Activated CD4-positive, alpha-beta memory T cell treated with anti-CD3 and anti-CD28 coated beads for 36 hours (primary cell): ENCODE measurements at regions of chr9 and their contacts with region 1.

Region 1: GRCh38 chr9:130712564-130713285 is 19.1 kb downstream of the EXOSC2 start:
- DNase-seq: peak; percentile 97
- H3K4me3 Mint-ChIP-seq: peak overlapping the region; percentile 89
- H3K27ac Mint-ChIP-seq: peak overlapping the region; percentile 88
- H3K4me1 Mint-ChIP-seq: peaks cover 33% of the 10 kb centered on the region
- H3K27me3 Mint-ChIP-seq: no peaks in the 10 kb centered on the region

Region 2: GRCh38 chr9:129823935-129824601 is 888.7 kb before region 1 on chr9 and contains the start of gene TOR1A:
- CTCF ChIA-PET with region 1: no interaction called
- POLR2A ChIA-PET with region 1: no interaction called
- intact Hi-C with region 1: loop called (anchors 10 kb)
- DNase-seq: peak; percentile 96
- H3K4me3 Mint-ChIP-seq: peak within 1 kb of the TSS; percentile 81
- H3K27ac Mint-ChIP-seq: peak within 1 kb of the TSS; percentile 80
- H3K4me1 Mint-ChIP-seq: peaks cover 13% of the 10 kb centered on the region
- H3K27me3 Mint-ChIP-seq: no peaks in the 10 kb centered on the region
- total RNA-seq, gene TOR1A: 38.5 to 41.6 TPM

Region 3: GRCh38 chr9:130624154-130624553 is 88.6 kb before region 1 on chr9:
- CTCF ChIA-PET with region 1: no interaction called
- POLR2A ChIA-PET with region 1: no interaction called
- intact Hi-C with region 1: no loop called
- DNase-seq: no peak
- H3K4me3 Mint-ChIP-seq: no peak overlapping the region
- H3K27ac Mint-ChIP-seq: no peak overlapping the region
- H3K4me1 Mint-ChIP-seq: no peaks in the 10 kb centered on the region
- H3K27me3 Mint-ChIP-seq: no peaks in the 10 kb centered on the region

Region 4: GRCh38 chr9:130693426-130694191 is 19.1 kb before region 1 on chr9 and contains the start of gene EXOSC2:
- CTCF ChIA-PET with region 1: interaction called, 29 read pairs
- POLR2A ChIA-PET with region 1: interaction called, 6 read pairs
- intact Hi-C with region 1: loop called (anchors 1 kb)
- DNase-seq: peak; percentile 99
- H3K4me3 Mint-ChIP-seq: peak within 1 kb of the TSS; percentile 90
- H3K27ac Mint-ChIP-seq: peak within 1 kb of the TSS; percentile 86
- H3K4me1 Mint-ChIP-seq: peaks cover 47% of the 10 kb centered on the region
- H3K27me3 Mint-ChIP-seq: no peaks in the 10 kb centered on the region
- total RNA-seq, gene EXOSC2: 77.3 to 80.5 TPM

Region 5: DNA sequence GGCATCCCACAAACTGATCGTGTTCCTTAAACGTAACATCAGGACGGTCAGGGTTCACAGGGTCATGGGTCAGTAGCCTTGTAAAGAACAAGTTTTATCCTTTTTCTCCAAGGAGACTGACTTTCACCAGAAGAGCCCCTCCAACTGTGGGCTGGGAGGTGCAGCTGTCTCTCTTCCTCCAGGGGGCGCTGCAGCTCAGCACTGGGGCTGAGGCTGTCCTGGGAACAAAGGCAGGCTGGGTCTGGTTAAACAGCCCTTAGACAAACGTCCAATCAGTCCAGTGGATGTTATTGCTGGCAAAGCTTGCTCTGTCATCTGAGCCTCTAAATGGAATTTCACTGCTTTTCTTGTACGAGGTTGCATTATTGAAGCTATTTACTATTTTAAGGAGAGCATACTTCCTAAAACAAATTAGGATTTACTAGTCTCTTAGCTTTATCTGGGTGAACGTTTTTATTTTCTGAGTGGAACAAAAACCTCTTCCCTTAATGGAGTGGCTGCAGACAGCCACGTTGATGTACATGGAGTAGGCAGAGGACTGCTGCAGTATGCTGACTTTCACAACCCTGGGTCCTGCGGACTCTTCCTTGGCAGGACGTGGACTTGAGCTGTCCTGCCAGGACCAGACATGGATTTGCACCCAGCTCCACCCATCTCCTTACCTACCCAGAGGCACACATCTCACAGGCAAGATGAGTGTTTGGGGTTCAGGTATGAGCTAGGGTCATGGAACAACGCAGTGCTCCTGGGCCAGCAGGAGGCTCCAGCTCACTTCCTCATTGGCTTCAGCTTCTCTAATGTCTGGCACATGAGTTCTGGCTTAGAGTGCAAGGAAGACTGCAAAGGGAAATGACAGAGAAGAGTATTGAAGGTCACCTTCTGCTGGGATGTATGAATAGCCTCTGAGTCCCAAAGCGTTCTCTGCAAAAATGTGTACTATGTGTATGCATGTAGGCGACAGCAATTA is 11.4 kb before region 1 on chr9:
- CTCF ChIA-PET with region 1: interaction called, 29 read pairs
- POLR2A ChIA-PET with region 1: no interaction called
- intact Hi-C with region 1: no loop called
- DNase-seq: peak; percentile 76
- H3K4me3 Mint-ChIP-seq: no peak overlapping the region
- H3K27ac Mint-ChIP-seq: no peak overlapping the region
- H3K4me1 Mint-ChIP-seq: peaks cover 20% of the 10 kb centered on the region
- H3K27me3 Mint-ChIP-seq: no peaks in the 10 kb centered on the region

Region 6: DNA sequence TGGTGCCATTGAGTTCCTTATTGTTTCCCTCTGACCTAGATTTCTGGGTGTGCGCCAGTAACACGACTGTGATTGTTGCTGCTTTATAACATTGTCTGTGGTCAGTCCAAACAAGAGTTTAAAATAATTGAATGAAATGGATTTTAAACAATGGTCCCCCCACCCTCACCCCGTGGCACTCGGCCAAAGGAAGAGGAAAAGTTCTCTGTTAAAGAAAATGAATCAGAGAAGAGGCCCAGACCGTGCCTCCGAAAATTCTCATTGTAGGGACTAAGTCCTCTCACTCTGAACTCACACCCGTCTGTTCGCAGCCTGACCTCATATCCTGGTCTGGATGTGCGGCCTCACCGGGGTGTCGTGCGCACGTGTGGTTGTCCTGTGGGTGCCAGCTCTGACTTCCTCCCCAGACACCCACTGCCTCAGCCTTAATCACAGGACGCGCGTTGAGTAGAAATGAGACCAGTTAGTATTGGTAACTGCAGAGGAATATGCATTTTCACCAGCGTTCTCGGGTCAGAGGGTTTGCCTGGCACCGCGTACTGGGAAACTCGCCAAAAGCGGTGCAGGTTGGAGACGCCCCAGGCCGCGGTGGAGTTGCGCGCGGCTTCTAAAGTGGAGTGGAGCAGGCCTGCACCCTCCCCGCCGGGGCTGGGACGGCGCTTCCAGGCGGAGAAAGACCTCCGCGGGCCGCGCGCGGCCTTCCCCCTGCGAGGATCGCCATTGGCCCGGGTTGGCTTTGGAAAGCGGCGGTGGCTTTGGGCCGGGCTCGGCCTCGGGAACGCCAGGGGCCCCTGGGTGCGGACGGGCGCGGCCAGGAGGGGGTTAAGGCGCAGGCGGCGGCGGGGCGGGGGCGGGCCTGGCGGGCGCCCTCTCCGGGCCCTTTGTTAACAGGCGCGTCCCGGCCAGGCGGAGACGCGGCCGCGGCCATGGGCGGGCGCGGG is 121.9 kb after region 1 on chr9 and contains the start of gene ABL1:
- CTCF ChIA-PET with region 1: no interaction called
- POLR2A ChIA-PET with region 1: no interaction called
- intact Hi-C with region 1: loop called (anchors 10 kb)
- DNase-seq: peak; percentile 90
- H3K4me3 Mint-ChIP-seq: peak within 1 kb of the TSS; percentile 86
- H3K27ac Mint-ChIP-seq: peak within 1 kb of the TSS; percentile 82
- H3K4me1 Mint-ChIP-seq: peaks cover 27% of the 10 kb centered on the region
- H3K27me3 Mint-ChIP-seq: no peaks in the 10 kb centered on the region
- total RNA-seq, gene ABL1: 24.8 to 24.9 TPM

Region 7: DNA sequence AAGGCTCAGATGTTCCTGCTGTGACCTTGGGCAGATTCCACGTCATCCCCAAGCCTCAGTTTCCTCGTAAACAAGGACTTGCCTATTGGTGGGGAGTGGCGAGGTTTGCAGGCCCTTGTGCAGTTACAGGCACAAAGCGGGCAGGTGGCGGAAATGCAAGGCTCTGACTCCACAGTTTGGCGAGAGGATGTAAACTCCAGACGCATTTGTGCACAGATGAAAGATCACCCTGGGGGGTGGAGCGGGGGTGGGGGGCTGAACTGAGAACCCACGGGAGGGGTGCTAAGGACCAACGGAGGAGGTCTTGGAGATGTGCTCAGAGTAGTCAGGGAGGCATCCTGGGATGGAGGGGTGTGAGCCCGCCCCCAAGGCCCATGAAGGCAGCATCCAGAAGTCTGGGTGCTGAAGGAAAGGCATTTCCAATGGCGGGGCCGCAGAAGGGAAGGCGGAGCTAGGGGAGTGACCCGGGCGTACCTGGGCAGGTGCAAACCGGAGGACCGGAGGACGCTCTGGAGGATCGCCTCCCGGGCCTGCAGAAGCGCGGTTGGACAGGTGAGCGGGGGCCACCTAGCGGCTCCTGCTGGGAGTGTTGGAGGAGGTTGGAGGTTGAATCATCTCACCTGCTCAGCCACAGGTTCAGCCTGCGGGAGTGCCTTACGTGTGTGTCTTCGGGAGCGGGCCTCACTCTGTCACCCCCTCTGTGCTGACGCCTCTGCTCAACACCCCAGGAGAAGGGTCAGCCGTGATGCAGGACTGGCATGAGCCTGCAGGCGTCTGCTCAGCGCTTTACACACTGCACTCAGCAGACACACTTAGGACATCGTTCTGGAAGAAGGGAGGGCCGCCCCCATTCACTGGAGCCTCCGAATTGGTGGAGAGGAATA is 228.2 kb after region 1 on chr9:
- CTCF ChIA-PET with region 1: no interaction called
- POLR2A ChIA-PET with region 1: no interaction called
- intact Hi-C with region 1: loop called (anchors 2 kb)
- DNase-seq: peak; percentile 85
- H3K4me3 Mint-ChIP-seq: no peak overlapping the region
- H3K27ac Mint-ChIP-seq: no peak overlapping the region
- H3K4me1 Mint-ChIP-seq: peaks cover 8% of the 10 kb centered on the region
- H3K27me3 Mint-ChIP-seq: peaks cover 45% of the 10 kb centered on the region

Region 8: GRCh38 chr9:131046581-131047202 is 334.0 kb after region 1 on chr9:
- CTCF ChIA-PET with region 1: interaction called, 13 read pairs
- POLR2A ChIA-PET with region 1: no interaction called
- intact Hi-C with region 1: loop called (anchors 10 kb)
- DNase-seq: peak; percentile 81
- H3K4me3 Mint-ChIP-seq: no peak overlapping the region
- H3K27ac Mint-ChIP-seq: no peak overlapping the region
- H3K4me1 Mint-ChIP-seq: peaks cover 4% of the 10 kb centered on the region
- H3K27me3 Mint-ChIP-seq: peaks cover 1% of the 10 kb centered on the region